Posterior cingulate gyrus (tissue), 11 donors: ENCODE measurements at regions of chr17 and their contacts with region 1.

Region 1: DNA sequence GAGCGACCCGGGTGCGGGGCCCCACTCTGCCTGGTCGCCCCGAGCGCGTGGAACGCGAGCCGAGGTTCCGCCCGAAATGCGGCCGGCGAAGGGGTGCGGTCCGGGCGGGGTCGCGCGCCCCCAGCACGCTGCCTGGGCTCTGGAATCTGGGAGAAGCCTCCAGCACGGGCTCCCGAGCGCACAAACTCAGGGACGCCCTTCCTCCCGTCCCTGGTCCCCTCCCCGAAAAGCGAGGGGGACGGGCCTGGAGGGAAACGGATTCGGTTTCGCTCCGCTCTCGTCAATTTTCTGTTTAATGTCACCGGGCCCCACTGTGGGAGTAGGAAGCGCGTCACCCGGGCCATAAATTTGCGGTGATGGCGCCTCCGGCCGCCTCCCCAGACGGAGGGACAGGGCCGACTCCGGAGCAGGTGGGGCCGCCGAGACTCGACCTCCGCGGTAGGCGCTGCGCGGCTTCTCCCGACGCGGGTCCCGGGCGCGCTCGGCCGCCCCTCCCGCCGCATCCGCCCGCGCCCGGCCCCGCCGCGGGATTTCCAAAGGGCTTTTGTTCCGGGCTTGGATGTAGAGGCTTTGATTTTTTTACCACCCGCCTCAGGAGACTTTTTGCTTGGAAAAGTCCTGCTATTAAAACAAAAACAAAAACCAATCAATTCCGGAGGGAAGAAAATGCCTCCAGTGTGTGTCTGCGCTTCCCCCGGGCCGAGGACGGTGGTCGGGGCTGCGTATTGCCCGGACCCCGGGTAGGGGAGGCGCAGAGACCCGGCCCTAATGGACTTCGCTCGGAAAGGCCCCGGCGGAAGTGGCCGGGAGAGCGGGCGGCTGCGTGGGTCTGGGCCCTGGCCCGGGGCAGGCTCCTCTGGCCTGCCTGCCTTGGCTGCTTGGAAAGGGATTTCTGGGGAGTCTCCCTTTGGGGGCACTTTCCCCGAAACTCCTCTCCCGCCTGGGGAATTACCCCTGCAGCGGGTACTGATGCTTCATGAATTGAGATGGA is 7.9 kb upstream of the BAHCC1 start:
- DNase-seq: peak in 3 of 10 donors; percentile 73 to 94 (median 86)

Region 2: GRCh38 chr17:81346090-81346907 is 41.1 kb before region 1 on chr17:
- intact Hi-C with region 1: loop called (anchors 1 kb)
- DNase-seq: peak; percentile 97 to 100 (median 99)

Region 3: DNA sequence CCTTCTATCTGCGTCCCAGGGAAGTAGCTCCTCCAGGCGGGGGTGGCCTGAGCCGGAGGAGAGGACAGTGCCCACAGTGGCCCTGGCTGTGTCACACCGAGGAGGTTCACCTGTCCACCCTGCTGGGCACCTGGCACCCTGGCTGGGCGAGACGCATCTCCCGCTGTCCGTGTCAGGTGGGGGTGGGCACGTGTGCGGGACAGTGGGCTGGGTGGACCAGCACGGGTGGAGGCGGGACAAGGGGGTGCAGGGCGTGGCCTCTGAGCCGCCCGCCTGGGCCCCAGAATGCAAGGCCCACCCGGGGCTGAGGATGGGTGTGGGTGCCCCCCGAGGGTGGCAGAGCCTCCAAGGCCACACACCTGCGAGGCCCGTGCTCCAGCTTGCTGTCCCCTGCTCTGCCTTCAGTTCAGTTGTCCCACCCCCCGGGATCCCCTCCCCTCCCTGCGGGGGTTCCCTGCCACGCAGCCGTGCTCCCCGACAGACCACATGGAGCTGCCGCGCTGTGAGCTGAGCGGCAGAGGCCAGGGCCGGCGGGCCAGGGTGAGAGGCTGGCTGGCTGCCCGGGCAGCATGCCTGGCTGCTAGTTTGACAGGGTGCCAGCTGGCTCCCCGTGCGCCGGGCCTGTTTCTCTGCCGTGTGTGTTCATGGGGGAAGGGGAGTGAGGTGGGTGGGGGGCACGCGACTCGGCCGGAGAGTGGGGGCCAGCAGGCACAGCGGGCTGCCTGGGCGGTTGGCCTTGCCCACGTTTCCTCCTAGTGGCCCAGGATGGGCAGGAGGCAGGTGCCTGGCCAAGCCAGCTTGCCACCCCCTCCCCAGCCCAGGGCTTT is 41.8 kb after region 1 on chr17:
- intact Hi-C with region 1: loop called (anchors 5 kb)
- DNase-seq: peak; percentile 67 to 97 (median 84)

Region 4: DNA sequence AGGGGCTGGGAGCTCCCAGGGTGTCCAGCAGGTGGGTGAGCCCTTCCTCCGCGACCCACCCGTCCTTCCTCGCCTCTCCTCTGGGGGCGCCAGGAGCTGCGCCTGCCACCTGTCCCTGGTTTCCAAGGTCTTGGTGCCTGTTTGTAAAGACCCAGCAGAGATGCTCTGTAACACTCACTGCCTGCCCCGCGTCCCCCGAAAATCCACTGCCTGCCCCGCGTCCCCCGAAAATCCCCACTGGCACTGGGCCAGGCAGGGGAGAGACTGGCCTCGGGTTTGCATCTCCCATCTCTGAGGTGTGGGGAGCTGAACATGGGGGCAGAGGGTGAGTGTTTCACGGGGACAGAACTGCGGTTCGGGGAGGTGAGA is 53.5 kb after region 1 on chr17:
- intact Hi-C with region 1: no loop called
- DNase-seq: no peak

Region 5: DNA sequence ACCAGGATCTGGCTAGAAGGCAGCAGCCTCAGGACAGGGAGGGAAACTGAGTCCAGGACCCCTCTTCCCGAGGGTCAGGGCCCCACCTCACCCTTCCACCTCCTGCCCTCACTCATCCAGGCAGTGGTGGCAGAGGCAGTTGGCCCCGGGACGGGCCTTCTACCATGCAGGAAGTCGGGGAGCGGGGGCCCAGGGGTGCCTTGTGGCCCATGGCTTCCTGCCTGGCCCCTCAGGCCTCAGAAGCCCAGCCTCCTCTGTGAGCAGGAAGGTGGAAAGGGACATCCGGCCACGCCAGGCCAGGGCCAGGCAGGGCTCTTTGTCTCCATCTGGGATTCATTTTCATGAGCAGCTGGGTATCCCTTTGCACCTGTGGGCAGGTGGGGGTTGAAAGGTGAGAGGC is 66.3 kb after region 1 on chr17:
- intact Hi-C with region 1: no loop called
- DNase-seq: no peak